ENCODE measurements at regions of chr12 and their contacts with region 1.

Region 1: DNA sequence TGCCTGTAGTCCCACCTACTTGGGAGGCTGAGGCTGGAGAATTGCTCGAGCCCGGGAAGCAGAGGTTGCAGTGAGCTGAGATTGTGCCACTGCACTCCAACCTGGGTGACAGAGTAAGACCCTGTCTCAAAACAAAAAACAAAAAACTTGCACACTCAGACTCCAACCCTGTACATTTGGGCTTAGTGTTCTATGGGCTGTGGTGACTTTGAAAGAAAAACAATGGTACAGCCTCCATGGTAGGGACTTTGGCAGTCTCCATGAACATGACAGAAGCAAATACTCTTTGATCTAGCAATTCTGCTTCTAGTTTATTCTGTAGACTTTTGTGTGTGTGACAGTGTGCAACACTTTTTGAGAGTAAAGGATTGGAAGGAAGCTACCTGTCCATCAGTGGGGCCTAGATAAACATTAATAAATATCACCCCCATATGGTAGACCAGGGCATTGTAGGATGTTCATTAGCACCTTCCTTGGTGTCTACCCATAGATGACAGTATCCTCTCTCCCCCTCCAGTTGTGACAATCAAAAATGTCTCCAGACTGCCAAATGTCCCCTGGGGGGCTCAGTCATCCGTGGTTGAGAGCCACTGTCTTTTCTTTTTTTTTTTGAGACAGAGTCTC is 10.7 kb downstream of the SNRNP35 start:
- DNase-seq: peak; percentile 76
- ATAC-seq: peak; percentile 97
- H3K4me3 ChIP-seq: no peak overlapping the region
- H3K4me3 Mint-ChIP-seq: no peak overlapping the region
- H3K27ac ChIP-seq: no peak overlapping the region
- H3K27ac Mint-ChIP-seq: peak overlapping the region; percentile 56
- H3K4me1 ChIP-seq: peaks cover 3 to 9% of the 10 kb centered on the region in 2 donors
- H3K4me1 Mint-ChIP-seq: peaks cover 12% of the 10 kb centered on the region
- H3K27me3 ChIP-seq: no peaks in the 10 kb centered on the region
- H3K27me3 Mint-ChIP-seq: no peaks in the 10 kb centered on the region
- CTCF ChIP-seq: peak; percentile 77

Region 2: DNA sequence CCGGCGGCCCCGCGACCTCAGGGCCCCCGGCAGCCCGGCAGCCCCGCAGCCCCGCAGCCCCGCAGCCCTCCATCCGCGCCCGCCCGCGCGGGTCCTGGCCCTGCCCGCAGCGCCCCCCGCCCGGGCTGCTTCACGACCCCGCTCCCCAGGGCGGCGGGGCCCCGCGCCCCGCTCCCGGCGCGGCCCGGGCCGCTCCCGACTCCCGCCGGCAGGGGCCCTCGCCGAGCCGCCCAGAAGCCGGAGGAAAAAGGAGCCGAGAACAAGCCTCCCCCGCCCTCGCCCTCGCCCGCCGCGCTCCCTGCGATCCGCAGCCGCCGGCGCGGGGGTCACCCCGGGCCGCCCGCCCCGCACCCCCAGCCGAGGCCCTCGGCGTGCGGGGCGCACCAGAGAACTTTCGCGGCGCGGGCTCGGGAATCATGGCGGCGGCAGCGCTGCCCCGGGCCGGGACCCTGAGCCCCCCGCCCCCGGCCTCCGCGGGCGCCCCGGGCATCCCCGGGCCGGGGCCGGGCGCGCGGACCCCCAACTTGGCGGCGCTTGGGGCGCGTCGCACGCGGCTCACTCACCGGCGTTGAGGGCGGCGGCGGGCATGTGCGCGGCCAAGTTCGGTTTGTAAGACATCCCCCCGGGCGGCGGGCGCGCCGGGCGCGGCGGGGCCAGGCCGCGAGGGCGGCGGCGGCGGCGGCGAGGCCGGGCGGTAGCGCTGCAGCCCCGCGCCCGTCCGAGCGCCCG is 197.5 kb before region 1 on chr12:
- CTCF ChIA-PET with region 1: no interaction called
- POLR2A ChIA-PET with region 1: no interaction called
- intact Hi-C with region 1: loop called (anchors 2 kb)
- DNase-seq: peak; percentile 81
- ATAC-seq: peak; percentile 74
- H3K4me3 ChIP-seq: peak overlapping the region in 3 of 5 experiments; percentile 52 to 56 (median 54)
- H3K4me3 Mint-ChIP-seq: no peak overlapping the region
- H3K27ac ChIP-seq: no peak overlapping the region
- H3K27ac Mint-ChIP-seq: no peak overlapping the region
- H3K4me1 ChIP-seq: peaks cover 31 to 37% of the 10 kb centered on the region in 2 donors
- H3K4me1 Mint-ChIP-seq: peaks cover 29% of the 10 kb centered on the region
- H3K27me3 ChIP-seq: peaks cover 0 to 6% (median 0%) of the 10 kb centered on the region in 4 experiments
- H3K27me3 Mint-ChIP-seq: no peaks in the 10 kb centered on the region
- CTCF ChIP-seq: peak; percentile 38

Region 3: GRCh38 chr12:123286652-123287373 is 181.9 kb before region 1 on chr12:
- CTCF ChIA-PET with region 1: no interaction called
- POLR2A ChIA-PET with region 1: no interaction called
- intact Hi-C with region 1: no loop called
- DNase-seq: no peak
- ATAC-seq: no peak
- H3K4me3 ChIP-seq: no peak overlapping the region
- H3K4me3 Mint-ChIP-seq: no peak overlapping the region
- H3K27ac ChIP-seq: no peak overlapping the region
- H3K27ac Mint-ChIP-seq: no peak overlapping the region
- H3K4me1 ChIP-seq: no peaks in the 10 kb centered on the region
- H3K4me1 Mint-ChIP-seq: no peaks in the 10 kb centered on the region
- H3K27me3 ChIP-seq: no peaks in the 10 kb centered on the region
- H3K27me3 Mint-ChIP-seq: no peaks in the 10 kb centered on the region
- CTCF ChIP-seq: no peak

Region 4: DNA sequence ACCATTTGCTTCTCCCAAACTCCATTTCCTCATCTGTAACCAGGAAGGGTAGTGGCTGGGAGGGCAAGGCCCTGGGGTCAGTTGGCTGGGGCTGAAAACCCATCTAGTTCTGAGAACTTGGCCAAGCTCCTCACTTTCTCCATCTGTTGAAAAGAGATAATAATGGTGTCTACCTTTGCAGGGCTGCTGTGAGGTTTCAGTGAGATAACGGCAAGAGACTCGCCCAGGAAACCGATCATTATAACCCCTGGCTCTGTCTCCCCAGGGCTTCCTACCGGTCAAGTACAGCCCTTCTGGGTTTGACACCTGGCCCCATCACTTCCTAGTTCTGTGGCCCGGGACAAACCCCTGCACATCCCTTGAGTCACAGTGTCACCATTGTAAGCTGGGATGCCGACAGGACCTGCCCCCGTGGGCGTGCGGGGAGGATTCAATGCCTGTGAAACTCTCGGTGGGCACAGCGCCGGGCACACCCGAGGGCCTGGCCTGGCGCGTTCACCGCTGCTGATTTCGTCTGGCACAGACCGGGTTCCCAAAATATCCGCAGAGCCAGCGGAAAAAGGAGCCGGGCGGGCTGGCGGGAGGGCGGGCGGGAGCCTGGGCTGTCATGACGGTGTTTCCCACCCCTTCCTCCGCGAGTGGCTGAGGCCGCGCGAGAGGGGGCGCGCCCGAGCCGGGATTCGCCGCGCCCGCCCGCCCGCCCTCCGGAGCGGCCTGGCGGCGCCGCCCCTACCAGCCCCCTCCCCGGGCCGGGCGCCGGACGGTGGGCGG is 80.3 kb before region 1 on chr12:
- CTCF ChIA-PET with region 1: interaction called, 4 read pairs
- POLR2A ChIA-PET with region 1: interaction called, 5 read pairs
- intact Hi-C with region 1: loop called (anchors 2 kb)
- DNase-seq: peak; percentile 85
- ATAC-seq: peak; percentile 62
- H3K4me3 ChIP-seq: peak overlapping the region; percentile 60 to 78 (median 63)
- H3K4me3 Mint-ChIP-seq: peak overlapping the region; percentile 91
- H3K27ac ChIP-seq: peak overlapping the region; percentile 74 to 80
- H3K27ac Mint-ChIP-seq: peak overlapping the region; percentile 93
- H3K4me1 ChIP-seq: peaks cover 22 to 36% of the 10 kb centered on the region in 2 donors
- H3K4me1 Mint-ChIP-seq: peaks cover 38% of the 10 kb centered on the region
- H3K27me3 ChIP-seq: no peaks in the 10 kb centered on the region
- H3K27me3 Mint-ChIP-seq: no peaks in the 10 kb centered on the region
- CTCF ChIP-seq: peak; percentile 9

Region 5: GRCh38 chr12:123410041-123410412 is 58.6 kb before region 1 on chr12:
- CTCF ChIA-PET with region 1: interaction called, 10 read pairs
- POLR2A ChIA-PET with region 1: interaction called, 3 read pairs
- intact Hi-C with region 1: no loop called
- DNase-seq: no peak
- ATAC-seq: no peak
- H3K4me3 ChIP-seq: no peak overlapping the region
- H3K4me3 Mint-ChIP-seq: no peak overlapping the region
- H3K27ac ChIP-seq: no peak overlapping the region
- H3K27ac Mint-ChIP-seq: peak overlapping the region; percentile 64
- H3K4me1 ChIP-seq: no peaks in the 10 kb centered on the region
- H3K4me1 Mint-ChIP-seq: peaks cover 3% of the 10 kb centered on the region
- H3K27me3 ChIP-seq: no peaks in the 10 kb centered on the region
- H3K27me3 Mint-ChIP-seq: no peaks in the 10 kb centered on the region
- CTCF ChIP-seq: no peak

Region 6: GRCh38 chr12:123457980-123458783 is 10.5 kb before region 1 on chr12 and contains the start of gene SNRNP35:
- CTCF ChIA-PET with region 1: interaction called, 14 read pairs
- POLR2A ChIA-PET with region 1: interaction called, 7 read pairs
- intact Hi-C with region 1: no loop called
- DNase-seq: peak; percentile 96
- ATAC-seq: peak; percentile 79
- H3K4me3 ChIP-seq: peak within 1 kb of the TSS; percentile 76 to 99 (median 95)
- H3K4me3 Mint-ChIP-seq: peak within 1 kb of the TSS; percentile 99
- H3K27ac ChIP-seq: peak within 1 kb of the TSS; percentile 92 to 98
- H3K27ac Mint-ChIP-seq: peak within 1 kb of the TSS; percentile 100
- H3K4me1 ChIP-seq: peaks cover 12 to 17% of the 10 kb centered on the region in 2 donors
- H3K4me1 Mint-ChIP-seq: peaks cover 26% of the 10 kb centered on the region
- H3K27me3 ChIP-seq: no peaks in the 10 kb centered on the region
- H3K27me3 Mint-ChIP-seq: no peaks in the 10 kb centered on the region
- CTCF ChIP-seq: no peak
- total RNA-seq, gene SNRNP35: 57.8 and 58.2 TPM in 2 replicates

Measured in B cell (primary cell).